Uterus (tissue), 4 donors: ENCODE measurements at regions of chr6 and their contacts with region 1.

Region 1: DNA sequence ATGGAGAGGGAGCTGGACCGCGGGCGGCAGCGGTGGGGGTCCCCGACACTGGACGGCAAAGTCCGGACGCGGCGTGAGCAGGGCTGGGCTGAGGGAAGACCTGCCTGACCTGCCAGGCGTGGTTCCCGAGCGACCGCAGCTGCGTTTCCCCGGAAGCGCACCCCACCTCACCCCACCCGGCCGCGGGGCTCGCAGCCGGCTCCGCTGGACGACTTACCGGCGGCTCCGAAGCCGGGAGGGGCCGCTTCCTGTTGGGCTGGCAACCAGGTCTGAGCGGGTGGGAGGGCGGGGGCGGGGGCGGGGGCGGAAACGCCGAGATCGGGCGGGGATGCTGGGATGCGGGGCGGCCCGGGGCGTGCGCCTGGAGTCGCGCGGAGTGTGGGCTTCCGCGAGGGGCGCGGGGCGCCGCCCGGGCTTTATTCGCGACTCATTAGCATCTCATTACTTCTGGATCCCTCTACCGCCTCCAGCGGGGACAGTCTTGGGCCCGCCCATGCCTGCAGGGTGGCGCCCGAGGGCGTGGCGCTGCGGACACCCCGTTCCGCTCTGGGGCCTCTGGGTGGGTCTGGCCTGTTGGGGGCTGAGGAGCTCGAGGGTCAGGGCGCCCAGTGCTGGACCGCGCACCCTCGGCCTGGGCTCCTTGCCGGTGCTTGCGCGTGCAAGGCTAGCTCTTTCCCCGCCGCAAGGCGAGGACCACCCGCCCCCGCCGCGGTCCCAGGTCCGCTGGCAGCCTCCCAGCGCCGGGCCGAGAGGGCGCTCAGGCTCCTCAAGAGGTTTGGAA is at the start of gene MICAL1:
- DNase-seq: peak; percentile 66 to 72
- H3K4me3 ChIP-seq: peak within 1 kb of the TSS; percentile 75 to 77
- H3K27ac ChIP-seq: peak within 1 kb of the TSS; percentile 80 to 82
- H3K4me1 ChIP-seq: no peaks in the 10 kb centered on the region
- H3K27me3 ChIP-seq: no peaks in the 10 kb centered on the region
- CTCF ChIP-seq: peak in 3 of 4 experiments; percentile 23 to 39 (median 32)
- POLR2A ChIP-seq: peak in 1 of 2 donors; percentile 42
- total RNA-seq, gene MICAL1: 27.2 to 46.1 (median 36.2) TPM

Region 2: DNA sequence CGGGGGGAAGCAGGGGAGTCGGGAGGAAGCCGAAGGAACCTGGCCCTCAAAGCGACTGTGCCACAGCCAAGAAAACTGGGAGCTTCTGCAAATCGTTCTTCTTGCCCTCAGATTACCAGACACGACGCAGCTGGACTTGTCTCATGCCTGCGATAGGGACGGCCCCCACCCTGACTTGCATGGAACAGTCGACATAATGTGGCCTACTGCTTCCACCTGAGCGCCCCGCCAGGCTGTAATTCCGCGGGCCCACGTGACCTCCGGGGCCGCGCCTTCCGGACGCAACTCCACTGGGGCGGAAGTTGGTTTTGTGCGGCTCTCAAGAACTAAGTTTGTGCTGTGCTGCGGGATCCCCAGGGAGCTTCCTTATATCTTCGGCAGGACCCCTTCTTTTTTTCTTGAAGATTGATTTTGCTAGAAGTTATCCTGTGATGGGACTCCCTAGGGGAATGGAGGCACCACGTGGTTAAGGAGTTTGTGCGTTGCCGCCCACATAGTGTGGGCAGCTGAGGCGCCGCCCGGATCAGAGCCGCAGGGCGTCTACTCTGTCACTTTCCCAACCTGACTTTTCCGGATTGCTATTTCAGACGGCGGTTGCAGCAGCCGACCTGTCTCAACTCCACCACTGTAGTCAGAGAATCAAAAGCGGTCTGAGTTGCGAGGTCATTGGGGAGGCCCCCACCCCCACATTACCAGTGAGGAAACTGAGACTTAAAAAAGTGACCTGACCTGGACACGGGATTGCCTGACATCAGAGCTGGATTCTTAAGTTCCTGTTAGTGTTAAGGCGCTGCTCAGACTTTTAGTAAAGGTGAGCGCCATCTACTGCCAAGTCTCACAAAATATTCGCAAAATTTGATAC is 72.9 kb before region 1 on chr6:
- intact Hi-C with region 1: loop called (anchors 10 kb)
- DNase-seq: peak; percentile 92
- H3K4me3 ChIP-seq: peak overlapping the region; percentile 75 to 91
- H3K27ac ChIP-seq: peak overlapping the region; percentile 97 to 100
- H3K4me1 ChIP-seq: no peaks in the 10 kb centered on the region
- H3K27me3 ChIP-seq: no peaks in the 10 kb centered on the region
- CTCF ChIP-seq: peak; percentile 46 to 60 (median 57)
- POLR2A ChIP-seq: peak in 1 of 2 donors; percentile 9

Region 3: GRCh38 chr6:109743739-109744138 is 288.0 kb after region 1 on chr6:
- intact Hi-C with region 1: no loop called
- DNase-seq: no peak
- H3K4me3 ChIP-seq: no peak overlapping the region
- H3K27ac ChIP-seq: no peak overlapping the region
- H3K4me1 ChIP-seq: no peaks in the 10 kb centered on the region
- H3K27me3 ChIP-seq: no peaks in the 10 kb centered on the region
- CTCF ChIP-seq: no peak
- POLR2A ChIP-seq: no peak